ENCODE measurements at regions of chr1 and their contacts with region 1.

Region 1: GRCh38 chr1:17125756-17126237 is 6.5 kb upstream of the PADI2 start:
- DNase-seq: peak; percentile 61
- H3K4me3 ChIP-seq: no peak overlapping the region
- H3K27ac ChIP-seq: no peak overlapping the region
- H3K27me3 ChIP-seq: no peaks in the 10 kb centered on the region
- CTCF ChIP-seq: peak; percentile 97

Region 2: DNA sequence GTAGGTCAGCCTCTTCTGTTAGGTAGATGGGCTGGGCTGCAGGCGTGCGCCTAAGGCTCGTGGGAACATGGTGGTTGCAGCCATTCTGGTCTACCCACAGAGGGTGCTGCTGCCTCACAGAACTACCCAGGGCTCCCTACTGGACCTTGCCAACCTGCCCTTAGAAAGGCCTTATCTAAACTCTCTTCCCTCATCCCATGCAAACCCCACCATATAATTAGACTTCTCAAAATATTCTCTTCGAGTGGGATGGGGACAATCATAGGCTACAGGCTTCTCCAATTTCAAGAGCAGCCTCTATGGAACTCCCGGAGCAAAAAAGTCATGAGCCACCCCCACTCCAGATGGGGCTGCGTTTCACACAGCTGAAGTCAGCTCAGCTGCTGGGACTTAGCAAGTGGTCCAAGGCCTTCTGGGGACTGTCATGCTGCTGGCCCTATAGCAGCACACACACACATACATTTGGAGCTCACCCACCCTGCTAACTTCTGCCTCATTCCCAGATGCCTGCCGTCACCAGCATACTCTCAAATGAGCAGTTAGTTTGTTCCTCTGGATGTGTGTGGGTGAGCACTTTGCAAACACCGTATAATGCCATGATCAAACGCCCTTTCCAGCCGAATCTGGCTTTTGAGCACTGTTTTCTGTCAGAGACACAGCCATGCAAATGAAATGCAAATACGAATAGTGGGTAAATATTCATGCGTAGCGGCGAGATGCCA is 65.9 kb before region 1 on chr1:
- CTCF ChIA-PET with region 1: interaction called, 11 read pairs
- POLR2A ChIA-PET with region 1: no interaction called
- DNase-seq: peak; percentile 26
- H3K4me3 ChIP-seq: no peak overlapping the region
- H3K27ac ChIP-seq: no peak overlapping the region
- H3K27me3 ChIP-seq: peaks cover 7% of the 10 kb centered on the region
- CTCF ChIP-seq: peak; percentile 84

Region 3: GRCh38 chr1:17244816-17245740 is 119.3 kb after region 1 on chr1:
- CTCF ChIA-PET with region 1: interaction called, 282 read pairs
- POLR2A ChIA-PET with region 1: interaction called, 3 read pairs
- DNase-seq: no peak
- H3K4me3 ChIP-seq: no peak overlapping the region
- H3K27ac ChIP-seq: no peak overlapping the region
- H3K27me3 ChIP-seq: peaks cover 6% of the 10 kb centered on the region
- CTCF ChIP-seq: no peak

Region 4: DNA sequence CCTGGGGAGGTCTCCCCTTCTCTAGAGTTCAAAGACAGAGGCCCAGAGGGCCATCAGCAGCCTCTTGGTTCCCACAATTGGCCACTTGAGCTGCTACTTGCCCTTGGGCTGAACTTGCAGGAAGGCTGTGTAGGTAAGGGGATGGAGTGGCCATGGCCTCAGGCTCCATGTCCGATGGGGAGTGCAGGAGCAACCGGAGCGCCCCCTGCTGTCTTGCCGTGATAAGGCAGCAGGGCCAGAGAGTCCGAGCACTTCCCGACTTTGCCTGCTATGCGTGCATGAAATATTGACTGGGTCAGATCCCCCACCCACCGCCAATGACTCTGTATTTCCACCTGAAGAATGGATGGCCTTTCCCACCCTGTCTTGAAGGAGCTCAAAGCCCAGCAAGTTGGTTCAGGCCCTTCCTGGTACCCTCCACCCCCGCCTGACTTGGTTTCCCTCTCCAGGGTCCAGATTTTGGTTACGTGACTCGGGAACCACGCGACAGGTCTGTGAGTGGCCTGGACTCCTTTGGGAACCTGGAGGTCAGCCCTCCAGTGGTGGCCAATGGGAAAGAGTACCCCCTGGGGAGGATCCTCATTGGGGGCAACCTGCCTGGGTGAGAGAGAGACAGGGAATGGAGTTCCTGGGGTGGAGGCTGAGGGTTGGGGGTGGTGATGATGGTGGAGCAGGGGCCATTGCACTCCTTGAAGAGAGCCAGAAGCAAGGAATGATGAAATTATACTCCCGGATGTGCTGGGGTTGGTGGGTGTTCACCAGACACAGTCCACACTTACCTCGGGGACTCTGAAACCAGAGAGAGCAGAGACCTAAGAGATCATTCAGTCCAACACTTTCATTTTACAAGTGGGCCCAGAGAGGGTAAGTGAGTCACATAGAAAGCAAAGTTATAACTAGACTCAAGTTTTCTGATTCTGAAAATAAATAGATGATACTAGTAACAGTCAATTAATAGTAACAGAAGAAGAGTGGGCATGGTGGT is 148.7 kb after region 1 on chr1:
- CTCF ChIA-PET with region 1: interaction called, 17 read pairs
- POLR2A ChIA-PET with region 1: no interaction called
- DNase-seq: no peak
- H3K4me3 ChIP-seq: no peak overlapping the region
- H3K27ac ChIP-seq: no peak overlapping the region
- H3K27me3 ChIP-seq: peaks cover 5% of the 10 kb centered on the region
- CTCF ChIP-seq: peak; percentile 68

Region 5: GRCh38 chr1:17335821-17336710 is 210.3 kb after region 1 on chr1:
- CTCF ChIA-PET with region 1: interaction called, 52 read pairs
- POLR2A ChIA-PET with region 1: interaction called, 7 read pairs
- DNase-seq: peak; percentile 6
- H3K4me3 ChIP-seq: no peak overlapping the region
- H3K27ac ChIP-seq: no peak overlapping the region
- H3K27me3 ChIP-seq: peaks cover 23% of the 10 kb centered on the region
- CTCF ChIP-seq: peak; percentile 88

Region 6: GRCh38 chr1:17441265-17441992 is 315.6 kb after region 1 on chr1:
- CTCF ChIA-PET with region 1: no interaction called
- POLR2A ChIA-PET with region 1: no interaction called
- DNase-seq: no peak
- H3K4me3 ChIP-seq: peak overlapping the region; percentile 7; the same call in 1 of the 2 replicates
- H3K27ac ChIP-seq: no peak overlapping the region
- H3K27me3 ChIP-seq: no peaks in the 10 kb centered on the region
- CTCF ChIP-seq: no peak

Measured in AG04450 (cell line).